ENCODE measurements at regions of chr3 and their contacts with region 1.

Region 1: DNA sequence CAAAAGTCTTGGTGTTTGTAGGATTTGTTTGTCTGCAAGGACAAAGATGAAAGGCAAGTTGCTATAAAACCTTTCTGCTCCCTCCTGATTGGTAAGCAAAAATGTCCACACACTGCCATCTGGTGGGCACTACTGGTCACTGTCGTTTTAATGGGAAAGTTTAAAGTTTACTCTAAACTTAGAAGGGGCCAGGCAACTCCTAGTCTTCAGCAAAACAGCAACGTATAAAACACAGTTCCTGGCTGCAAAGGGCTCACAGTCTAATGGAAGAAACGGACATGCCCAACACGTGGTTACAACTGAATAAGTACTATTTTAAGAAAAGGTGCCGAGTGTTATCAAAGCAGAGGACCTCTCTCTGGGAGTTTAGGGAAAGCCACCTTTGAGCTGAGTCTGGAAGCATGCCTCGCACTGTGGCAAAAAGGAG is 23.7 kb upstream of the TPRG1 start:
- DNase-seq: peak; percentile 49 to 85
- ATAC-seq: peak; percentile 70 to 87 (median 82)
- H3K4me3 ChIP-seq: no peak overlapping the region
- H3K4me3 Mint-ChIP-seq: no peak overlapping the region
- H3K27ac ChIP-seq: no peak overlapping the region
- H3K27ac Mint-ChIP-seq: no peak overlapping the region
- H3K4me1 ChIP-seq: no peaks in the 10 kb centered on the region
- H3K4me1 Mint-ChIP-seq: peaks cover 13 to 15% of the 10 kb centered on the region in 2 donors
- H3K27me3 ChIP-seq: no peaks in the 10 kb centered on the region
- H3K27me3 Mint-ChIP-seq: peaks cover 10 to 12% of the 10 kb centered on the region in 2 donors
- CTCF ChIP-seq: peak; percentile 73

Region 2: DNA sequence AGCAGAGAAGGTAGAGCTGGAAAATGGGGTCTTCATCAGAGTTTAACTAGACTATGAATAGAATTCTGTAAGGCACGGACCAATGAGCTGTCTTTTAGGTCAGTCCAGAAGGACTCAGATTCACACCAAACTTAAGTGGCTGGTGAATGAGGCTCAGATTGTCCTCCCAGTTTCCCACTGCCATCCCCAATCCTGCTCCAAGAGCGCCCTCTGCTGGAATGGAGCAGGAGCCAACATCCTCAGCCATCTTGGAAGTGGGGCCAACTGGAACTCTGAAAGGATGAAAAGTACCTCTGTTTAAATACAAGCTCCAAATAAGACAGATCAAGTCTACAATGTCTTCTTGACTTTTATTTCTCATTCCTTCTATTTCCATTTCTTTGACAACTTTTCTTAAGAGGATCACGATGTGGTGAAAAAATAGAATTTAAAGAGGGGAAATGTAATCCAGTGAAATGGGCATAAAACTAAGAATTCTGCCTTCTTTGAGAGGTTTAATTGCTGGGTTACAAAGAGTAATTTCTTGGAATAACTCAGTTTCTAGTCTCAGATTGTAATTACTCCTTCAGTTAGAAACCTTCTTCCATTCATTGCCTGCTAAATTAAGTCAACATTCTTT is 193.4 kb before region 1 on chr3:
- intact Hi-C with region 1: loop called (anchors 2 kb)
- DNase-seq: peak; percentile 59 to 87
- ATAC-seq: peak; percentile 73 to 85 (median 83)
- H3K4me3 ChIP-seq: no peak overlapping the region
- H3K4me3 Mint-ChIP-seq: no peak overlapping the region
- H3K27ac ChIP-seq: no peak overlapping the region
- H3K27ac Mint-ChIP-seq: no peak overlapping the region
- H3K4me1 ChIP-seq: peaks cover 3% of the 10 kb centered on the region
- H3K4me1 Mint-ChIP-seq: no peaks in the 10 kb centered on the region
- H3K27me3 ChIP-seq: no peaks in the 10 kb centered on the region
- H3K27me3 Mint-ChIP-seq: peaks cover 0 to 2% of the 10 kb centered on the region in 2 donors
- CTCF ChIP-seq: peak; percentile 87

Region 3: GRCh38 chr3:189041482-189042090 is 106.5 kb before region 1 on chr3:
- intact Hi-C with region 1: loop called (anchors 1 kb)
- DNase-seq: peak; percentile 33 to 89
- ATAC-seq: peak; percentile 80 to 92 (median 91)
- H3K4me3 ChIP-seq: no peak overlapping the region
- H3K4me3 Mint-ChIP-seq: no peak overlapping the region
- H3K27ac ChIP-seq: no peak overlapping the region
- H3K27ac Mint-ChIP-seq: no peak overlapping the region
- H3K4me1 ChIP-seq: no peaks in the 10 kb centered on the region
- H3K4me1 Mint-ChIP-seq: no peaks in the 10 kb centered on the region
- H3K27me3 ChIP-seq: no peaks in the 10 kb centered on the region
- H3K27me3 Mint-ChIP-seq: peaks cover 0 to 3% of the 10 kb centered on the region in 2 donors
- CTCF ChIP-seq: peak; percentile 40